OCI-LY7 (cell line): ENCODE measurements at regions of chr6 and their contacts with region 1.

Region 1: DNA sequence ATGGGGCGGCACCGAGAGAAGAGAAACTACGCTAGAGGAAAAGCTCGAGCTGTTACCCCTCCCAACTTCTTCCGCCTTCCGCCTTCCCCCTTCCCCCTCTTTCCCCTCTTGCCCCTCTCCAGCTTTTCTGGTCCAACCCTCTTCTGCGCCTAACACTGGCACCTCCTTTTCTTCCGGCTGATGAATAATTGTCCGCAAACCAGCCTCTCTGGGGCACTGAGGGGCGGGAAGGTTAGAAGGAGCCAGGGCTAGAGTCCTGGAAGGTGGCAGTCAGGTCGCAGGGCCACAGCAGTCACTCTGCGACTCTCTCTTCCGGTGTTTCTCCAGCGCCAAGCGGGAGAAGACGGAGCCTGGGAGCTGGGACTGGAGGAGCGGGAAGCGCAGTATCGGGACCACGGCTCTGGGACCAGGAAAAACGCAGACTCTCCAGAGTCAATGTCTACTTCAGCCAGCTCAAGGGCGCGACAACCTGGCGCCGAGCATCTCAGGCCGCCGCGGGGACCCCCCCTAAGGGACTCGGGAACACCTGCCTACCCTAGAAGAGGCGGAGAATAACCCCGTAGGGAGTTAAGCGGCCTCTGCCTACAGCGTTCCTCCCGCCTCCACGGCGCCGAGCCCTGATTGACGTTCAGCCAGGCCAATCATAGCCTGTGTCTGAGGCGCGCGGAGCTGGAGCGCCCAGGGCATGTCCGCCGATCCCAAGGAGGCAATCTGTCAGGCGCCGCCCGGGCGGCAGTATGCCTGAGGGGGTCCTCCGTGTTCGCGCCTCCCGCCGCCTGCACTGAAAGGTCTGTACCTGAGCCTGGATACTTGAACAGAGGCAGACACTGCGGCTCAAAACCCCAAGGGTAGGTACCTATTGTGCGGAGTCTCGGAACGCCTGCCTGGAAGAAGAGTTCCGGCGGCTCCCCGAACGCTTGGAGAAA is 40.4 kb downstream of the PSMB9 start:
- DNase-seq: peak; percentile 97
- H3K4me3 ChIP-seq: peak overlapping the region; percentile 97
- H3K27ac ChIP-seq: peak overlapping the region; percentile 79
- H3K4me1 ChIP-seq: peaks cover 57% of the 10 kb centered on the region
- CTCF ChIP-seq: no peak

Region 2: GRCh38 chr6:32920715-32921114 is 26.4 kb after region 1 on chr6:
- CTCF ChIA-PET with region 1: no interaction called
- POLR2A ChIA-PET with region 1: interaction called, 5 read pairs
- intact Hi-C with region 1: loop called (anchors 2 kb)
- DNase-seq: no peak
- H3K4me3 ChIP-seq: peak overlapping the region; percentile 2
- H3K27ac ChIP-seq: no peak overlapping the region
- H3K4me1 ChIP-seq: peaks cover 33% of the 10 kb centered on the region
- CTCF ChIP-seq: no peak

Region 3: DNA sequence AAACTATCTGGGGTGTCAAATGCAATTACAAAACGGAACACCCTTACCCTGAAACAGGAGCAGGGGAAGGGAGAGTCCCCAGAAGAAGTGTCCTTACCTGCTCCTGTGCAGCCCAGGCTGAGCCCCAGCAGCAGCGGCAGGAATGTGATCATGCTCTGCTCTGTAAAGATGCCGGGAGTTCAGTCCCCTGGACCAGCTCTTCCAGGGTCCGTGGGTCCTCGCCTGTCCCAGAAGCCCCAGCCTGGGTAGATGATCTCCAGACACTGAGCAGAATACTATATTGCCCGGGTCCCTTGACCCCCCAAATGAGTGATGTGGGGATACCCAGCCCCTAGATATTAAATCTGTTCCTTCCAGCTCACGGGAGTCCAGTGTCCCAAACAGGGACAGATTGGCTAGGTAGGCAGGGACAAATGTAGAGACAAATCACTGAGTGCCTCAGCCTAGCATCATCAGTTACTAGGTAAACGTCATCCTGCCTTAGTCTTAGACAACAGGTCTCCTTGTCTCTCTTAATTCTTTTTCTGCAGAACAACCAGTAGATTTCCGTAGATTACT is 46.4 kb after region 1 on chr6 and contains the start of gene HLA-DMB:
- CTCF ChIA-PET with region 1: no interaction called
- POLR2A ChIA-PET with region 1: interaction called, 9 read pairs
- intact Hi-C with region 1: loop called (anchors 1 kb)
- DNase-seq: peak; percentile 91
- H3K4me3 ChIP-seq: peak within 1 kb of the TSS; percentile 91
- H3K27ac ChIP-seq: peak within 1 kb of the TSS; percentile 99
- H3K4me1 ChIP-seq: peaks cover 68% of the 10 kb centered on the region
- CTCF ChIP-seq: no peak
- total RNA-seq, gene HLA-DMB: 85.1 and 98.0 TPM in 2 replicates